HepG2 (cell line): ENCODE measurements at regions of chr9 and their contacts with region 1.

Region 1: GRCh38 chr9:125241000-125241862 is at the start of gene HSPA5:
- DNase-seq: peak; percentile 99
- ATAC-seq: peak; percentile 95
- H3K4me3 ChIP-seq: peak within 1 kb of the TSS; percentile 89 to 98 (median 97)
- H3K27ac ChIP-seq: peak within 1 kb of the TSS; percentile 97
- H3K4me1 ChIP-seq: peaks cover 55% of the 10 kb centered on the region
- H3K27me3 ChIP-seq: no peaks in the 10 kb centered on the region; a peak in 1 of 5 replicates
- CTCF ChIP-seq: peak; percentile 45
- EP300 ChIP-seq: peak in 1 of 2 experiments; percentile 5; a peak in 2 of 4 replicates
- POLR2A ChIP-seq: peak; percentile 98 to 99
- RAD21 ChIP-seq: no peak
- total RNA-seq, gene HSPA5: 170 and 201 TPM in 2 replicates

Region 2: GRCh38 chr9:125200210-125201047 is 40.8 kb before region 1 on chr9 and contains the start of gene RABEPK:
- CTCF ChIA-PET with region 1: no interaction called
- POLR2A ChIA-PET with region 1: interaction called, 59 read pairs
- in situ Hi-C with region 1: no loop called
- intact Hi-C with region 1: loop called (anchors 2 kb)
- DNase-seq: peak; percentile 89
- ATAC-seq: peak; percentile 93
- H3K4me3 ChIP-seq: peak within 1 kb of the TSS; percentile 76 to 90 (median 77)
- H3K27ac ChIP-seq: peak within 1 kb of the TSS; percentile 91
- H3K4me1 ChIP-seq: peaks cover 51% of the 10 kb centered on the region
- H3K27me3 ChIP-seq: no peaks in the 10 kb centered on the region
- CTCF ChIP-seq: 0 out of 2 replicates have a peak, but pooled peaks have one; percentile 12
- EP300 ChIP-seq: no peak
- POLR2A ChIP-seq: peak; percentile 94
- RAD21 ChIP-seq: peak; percentile 45; the same call in 1 of the 2 replicates
- total RNA-seq, gene RABEPK: 90.0 and 103 TPM in 2 replicates

Region 3: GRCh38 chr9:125255781-125256391 is 14.7 kb after region 1 on chr9:
- CTCF ChIA-PET with region 1: no interaction called
- POLR2A ChIA-PET with region 1: interaction called, 73 read pairs
- in situ Hi-C with region 1: no loop called
- intact Hi-C with region 1: loop called (anchors 1 kb)
- DNase-seq: peak; percentile 35
- ATAC-seq: peak; percentile 83
- H3K4me3 ChIP-seq: no peak overlapping the region
- H3K27ac ChIP-seq: no peak overlapping the region
- H3K4me1 ChIP-seq: peaks cover 32% of the 10 kb centered on the region
- H3K27me3 ChIP-seq: no peaks in the 10 kb centered on the region
- CTCF ChIP-seq: peak; percentile 77
- EP300 ChIP-seq: no peak
- POLR2A ChIP-seq: no peak
- RAD21 ChIP-seq: peak; percentile 68

Region 4: GRCh38 chr9:125272697-125273096 is 31.5 kb after region 1 on chr9:
- CTCF ChIA-PET with region 1: no interaction called
- POLR2A ChIA-PET with region 1: interaction called, 25 read pairs
- in situ Hi-C with region 1: no loop called
- intact Hi-C with region 1: no loop called
- DNase-seq: peak; percentile 90
- ATAC-seq: peak; percentile 89
- H3K4me3 ChIP-seq: peak overlapping the region in 2 of 3 experiments; percentile 11 to 40; a peak in 2 of 6 replicates
- H3K27ac ChIP-seq: peak overlapping the region; percentile 81
- H3K4me1 ChIP-seq: peaks cover 76% of the 10 kb centered on the region
- H3K27me3 ChIP-seq: no peaks in the 10 kb centered on the region
- CTCF ChIP-seq: no peak
- EP300 ChIP-seq: peak in 1 of 2 experiments; percentile 91; a peak in 2 of 4 replicates
- POLR2A ChIP-seq: no peak
- RAD21 ChIP-seq: no peak

Region 5: DNA sequence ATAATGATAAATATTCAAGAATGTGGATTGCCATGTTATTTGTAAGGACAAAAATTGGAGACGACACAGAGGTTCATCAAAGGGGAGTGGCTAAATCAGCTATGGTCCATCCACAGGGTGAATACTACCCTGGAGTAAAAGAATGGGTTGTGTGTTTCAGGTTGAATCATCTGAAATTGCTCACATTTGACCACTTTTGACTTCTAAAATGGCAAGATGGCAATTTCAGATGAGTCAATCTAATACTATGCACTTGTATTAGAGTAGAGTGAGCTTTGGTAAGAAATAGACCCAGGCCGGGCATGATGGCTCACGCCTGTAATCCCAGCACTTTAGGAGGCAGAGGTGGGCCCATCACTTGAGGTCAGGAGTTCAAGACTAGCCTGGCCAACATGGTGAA is 152.2 kb after region 1 on chr9:
- CTCF ChIA-PET with region 1: no interaction called
- POLR2A ChIA-PET with region 1: no interaction called
- in situ Hi-C with region 1: no loop called
- intact Hi-C with region 1: no loop called
- DNase-seq: no peak
- ATAC-seq: no peak
- H3K4me3 ChIP-seq: no peak overlapping the region
- H3K27ac ChIP-seq: no peak overlapping the region
- H3K4me1 ChIP-seq: peaks cover 15% of the 10 kb centered on the region
- H3K27me3 ChIP-seq: no peaks in the 10 kb centered on the region; a peak in 1 of 5 replicates
- CTCF ChIP-seq: no peak
- EP300 ChIP-seq: no peak
- POLR2A ChIP-seq: no peak
- RAD21 ChIP-seq: no peak